ENCODE measurements at regions of chr2 and their contacts with region 1.

Region 1: GRCh38 chr2:120174963-120175581 is 48.1 kb downstream of the TMEM185B start:
- DNase-seq: no peak
- ATAC-seq: no peak
- H3K4me3 ChIP-seq: no peak overlapping the region
- H3K27ac ChIP-seq: no peak overlapping the region
- H3K4me1 ChIP-seq: peaks cover 28% of the 10 kb centered on the region
- H3K27me3 ChIP-seq: no peaks in the 10 kb centered on the region
- CTCF ChIP-seq: peak; percentile 64 to 74 (median 64)
- EP300 ChIP-seq: no peak
- POLR2A ChIP-seq: no peak
- RAD21 ChIP-seq: peak; percentile 82

Region 2: DNA sequence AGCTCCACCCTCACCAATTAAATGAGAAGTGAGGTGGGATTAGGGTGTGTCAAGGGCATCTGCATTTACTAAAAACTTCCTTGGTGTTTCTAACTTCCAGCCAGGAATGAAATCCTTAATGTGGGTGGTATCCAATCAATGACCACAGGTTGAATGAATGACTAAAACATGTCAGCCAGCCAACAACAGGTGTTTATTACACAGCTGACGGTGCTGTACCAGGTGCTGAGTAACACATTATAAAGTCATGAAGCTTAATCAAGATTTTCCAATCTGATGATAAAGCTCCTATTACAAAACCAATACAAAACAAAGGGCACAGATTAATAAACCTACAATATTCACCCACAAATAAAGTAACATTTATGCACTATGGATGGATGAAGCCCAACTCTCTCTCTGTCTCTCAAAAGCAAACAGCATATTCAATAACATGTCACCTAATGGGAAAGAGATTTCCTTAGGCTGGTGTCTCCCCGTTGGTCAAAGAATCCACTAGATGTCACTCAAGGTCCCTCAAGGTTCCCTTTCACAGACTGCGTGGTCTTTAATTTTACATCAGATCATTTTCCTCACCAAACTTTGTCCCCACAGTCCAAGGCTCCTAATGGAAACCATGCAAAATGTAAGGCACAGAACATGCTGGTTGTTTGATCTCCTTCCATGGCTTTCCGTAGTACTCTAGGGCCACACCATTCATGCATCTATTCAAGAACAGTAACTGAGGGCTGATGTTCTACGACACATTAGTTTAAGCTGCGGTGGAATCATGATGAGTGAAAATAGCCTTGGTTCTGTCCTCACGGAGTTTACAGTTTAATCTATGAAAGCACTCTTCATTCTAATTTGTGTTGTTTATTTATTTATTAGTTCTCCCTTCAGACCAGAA is 421.8 kb before region 1 on chr2:
- CTCF ChIA-PET with region 1: interaction called, 144 read pairs
- POLR2A ChIA-PET with region 1: interaction called, 3 read pairs
- RAD21 ChIA-PET with region 1: interaction called, 90 read pairs
- SMC1A ChIA-PET with region 1: interaction called, 69 read pairs
- in situ Hi-C with region 1: loop called (anchors 5 kb)
- intact Hi-C with region 1: loop called (anchors 1 kb)
- DNase-seq: no peak
- ATAC-seq: peak; percentile 91
- H3K4me3 ChIP-seq: no peak overlapping the region
- H3K27ac ChIP-seq: no peak overlapping the region
- H3K4me1 ChIP-seq: no peaks in the 10 kb centered on the region
- H3K27me3 ChIP-seq: peaks cover 0 to 5% of the 10 kb centered on the region in 2 experiments; a peak in 1 of 4 replicates
- CTCF ChIP-seq: peak; percentile 68 to 81 (median 73)
- EP300 ChIP-seq: no peak
- POLR2A ChIP-seq: no peak
- RAD21 ChIP-seq: peak; percentile 92

Region 3: DNA sequence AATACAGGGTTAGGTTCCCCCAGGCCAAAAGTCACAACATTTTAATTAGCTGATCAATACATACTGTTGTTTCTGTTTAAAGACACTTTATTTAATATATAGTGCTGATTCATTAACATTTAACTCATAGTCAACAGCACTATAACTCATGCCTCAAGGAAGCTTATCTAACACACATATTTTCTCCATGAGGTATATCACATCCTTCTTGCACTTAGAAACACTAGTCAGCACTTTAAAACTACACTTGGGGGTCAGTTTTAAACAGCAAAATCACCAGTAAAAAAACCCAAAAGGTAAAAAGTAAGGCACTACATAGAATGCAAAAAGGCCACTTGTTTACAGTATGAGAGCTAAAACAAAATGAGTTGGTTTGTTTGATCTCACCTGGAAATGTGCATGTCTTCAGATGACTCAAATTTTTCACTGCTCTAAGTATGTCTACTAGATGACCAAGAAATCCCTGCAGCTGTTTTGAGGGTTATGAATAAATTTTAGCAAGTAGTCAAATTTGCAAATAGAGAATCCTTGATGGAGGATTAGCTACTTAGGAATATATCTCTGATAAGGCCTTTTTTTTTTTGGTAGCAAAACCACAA is 216.3 kb before region 1 on chr2:
- CTCF ChIA-PET with region 1: interaction called, 10 read pairs
- POLR2A ChIA-PET with region 1: no interaction called
- RAD21 ChIA-PET with region 1: no interaction called
- SMC1A ChIA-PET with region 1: interaction called, 3 read pairs
- in situ Hi-C with region 1: no loop called
- intact Hi-C with region 1: no loop called
- DNase-seq: no peak
- ATAC-seq: no peak
- H3K4me3 ChIP-seq: no peak overlapping the region
- H3K27ac ChIP-seq: no peak overlapping the region
- H3K4me1 ChIP-seq: no peaks in the 10 kb centered on the region
- H3K27me3 ChIP-seq: no peaks in the 10 kb centered on the region
- CTCF ChIP-seq: no peak
- EP300 ChIP-seq: no peak
- POLR2A ChIP-seq: no peak
- RAD21 ChIP-seq: no peak

Region 4: DNA sequence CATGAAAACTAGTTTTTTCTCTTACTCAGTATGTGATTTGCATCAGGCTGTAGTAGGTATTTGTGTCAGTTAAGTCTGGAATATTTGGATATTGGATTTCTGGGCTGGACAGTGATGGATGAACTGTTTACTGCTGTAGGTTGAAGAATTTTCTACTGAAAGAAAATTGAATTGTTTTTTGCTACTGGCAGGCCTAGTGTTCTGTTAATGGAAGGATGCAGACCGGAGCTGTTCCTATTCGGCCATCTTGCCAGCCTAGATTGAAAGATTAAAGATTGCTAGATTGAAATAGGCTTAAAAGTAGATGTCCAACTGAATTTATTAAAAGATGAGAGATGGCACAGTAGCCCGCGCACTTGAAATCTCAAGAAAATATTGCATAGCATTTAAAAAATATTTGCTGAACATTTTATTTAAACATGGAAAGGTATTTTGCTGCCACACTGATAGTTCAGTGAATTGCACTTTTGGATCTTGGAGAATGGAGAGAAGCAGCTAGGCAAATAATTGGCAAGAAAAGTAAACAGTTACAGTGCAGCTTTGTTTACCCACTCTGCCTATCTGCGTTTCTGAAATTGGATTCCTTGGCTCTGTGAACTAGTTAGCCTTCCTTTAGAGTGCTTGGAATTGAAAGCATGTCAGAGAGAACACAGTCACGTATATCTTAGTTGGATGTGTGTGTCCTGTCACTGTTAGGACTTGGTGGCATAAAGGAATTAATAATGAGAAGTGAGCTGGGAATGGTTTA is 108.1 kb before region 1 on chr2:
- CTCF ChIA-PET with region 1: no interaction called
- POLR2A ChIA-PET with region 1: no interaction called
- RAD21 ChIA-PET with region 1: no interaction called
- SMC1A ChIA-PET with region 1: no interaction called
- in situ Hi-C with region 1: no loop called
- intact Hi-C with region 1: no loop called
- DNase-seq: no peak
- ATAC-seq: no peak
- H3K4me3 ChIP-seq: no peak overlapping the region
- H3K27ac ChIP-seq: no peak overlapping the region
- H3K4me1 ChIP-seq: no peaks in the 10 kb centered on the region
- H3K27me3 ChIP-seq: no peaks in the 10 kb centered on the region
- CTCF ChIP-seq: no peak
- EP300 ChIP-seq: no peak
- POLR2A ChIP-seq: no peak
- RAD21 ChIP-seq: no peak

Region 5: GRCh38 chr2:120109186-120110061 is 65.6 kb before region 1 on chr2:
- CTCF ChIA-PET with region 1: interaction called, 148 read pairs
- POLR2A ChIA-PET with region 1: interaction called, 3 read pairs
- RAD21 ChIA-PET with region 1: interaction called, 65 read pairs
- SMC1A ChIA-PET with region 1: interaction called, 103 read pairs
- in situ Hi-C with region 1: no loop called
- intact Hi-C with region 1: loop called (anchors 1 kb)
- DNase-seq: peak; percentile 19
- ATAC-seq: peak; percentile 71
- H3K4me3 ChIP-seq: no peak overlapping the region
- H3K27ac ChIP-seq: no peak overlapping the region
- H3K4me1 ChIP-seq: peaks cover 7% of the 10 kb centered on the region
- H3K27me3 ChIP-seq: no peaks in the 10 kb centered on the region
- CTCF ChIP-seq: peak; percentile 28 to 55 (median 46); a peak in 5 of 6 replicates
- EP300 ChIP-seq: no peak
- POLR2A ChIP-seq: no peak
- RAD21 ChIP-seq: peak; percentile 67

Region 6: DNA sequence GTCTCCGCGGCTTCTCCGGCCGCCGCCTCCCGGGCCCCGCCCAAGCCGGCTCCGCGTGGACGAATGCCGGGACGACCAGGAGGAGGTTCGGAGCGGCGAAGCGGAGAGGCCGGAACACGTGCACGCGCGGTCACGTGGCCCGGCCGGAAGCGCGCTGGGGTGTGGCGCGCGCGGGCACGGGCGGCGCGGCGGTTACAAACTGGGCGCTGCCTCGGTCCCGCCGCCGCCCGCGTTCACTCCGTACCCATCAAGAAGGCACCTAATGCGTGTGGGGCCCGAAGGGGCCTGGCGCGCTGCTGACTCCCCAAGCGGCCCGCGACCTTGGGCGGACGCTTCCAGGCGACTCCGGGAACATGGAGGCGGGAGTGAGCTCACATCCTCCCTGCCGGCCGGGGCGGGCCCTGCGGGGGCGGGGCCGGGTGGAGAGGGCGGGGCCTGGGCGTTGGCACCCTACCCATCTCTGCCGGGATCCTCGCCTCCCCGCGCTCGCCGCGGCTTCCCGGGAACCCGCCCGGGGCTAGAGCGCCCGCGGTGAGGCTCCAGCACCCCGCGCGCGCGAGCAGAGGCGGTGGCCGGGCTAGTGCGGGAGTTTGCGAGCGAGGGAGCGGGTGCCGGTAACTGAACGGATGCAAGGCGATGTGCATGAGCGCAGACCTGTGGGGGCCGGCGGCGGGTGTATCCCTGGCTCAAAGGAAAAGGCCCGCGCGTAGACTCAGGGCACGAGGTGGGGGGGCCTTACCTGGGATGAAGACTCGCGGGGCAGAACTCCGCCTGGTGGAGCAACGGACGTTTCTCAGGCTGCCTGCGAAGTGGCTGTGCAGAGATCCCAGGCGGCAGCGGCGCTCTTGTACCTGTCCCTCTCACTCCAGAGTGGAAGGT is 48.2 kb after region 1 on chr2 and contains the start of gene TMEM185B:
- CTCF ChIA-PET with region 1: interaction called, 13 read pairs
- POLR2A ChIA-PET with region 1: no interaction called
- RAD21 ChIA-PET with region 1: interaction called, 14 read pairs
- SMC1A ChIA-PET with region 1: interaction called, 12 read pairs
- in situ Hi-C with region 1: no loop called
- intact Hi-C with region 1: no loop called
- DNase-seq: no peak
- ATAC-seq: peak; percentile 94
- H3K4me3 ChIP-seq: peak within 1 kb of the TSS; percentile 81
- H3K27ac ChIP-seq: peak within 1 kb of the TSS; percentile 83
- H3K4me1 ChIP-seq: peaks cover 22% of the 10 kb centered on the region
- H3K27me3 ChIP-seq: no peaks in the 10 kb centered on the region
- CTCF ChIP-seq: peak; percentile 24 to 50 (median 30); a peak in 5 of 6 replicates
- EP300 ChIP-seq: peak in 1 of 2 experiments; percentile 45; a peak in 1 of 4 replicates
- POLR2A ChIP-seq: peak; percentile 94
- RAD21 ChIP-seq: peak; percentile 33; the same call in 1 of the 2 replicates
- polyA plus RNA-seq, gene TMEM185B: 2.4 to 3.2 TPM

Region 7: DNA sequence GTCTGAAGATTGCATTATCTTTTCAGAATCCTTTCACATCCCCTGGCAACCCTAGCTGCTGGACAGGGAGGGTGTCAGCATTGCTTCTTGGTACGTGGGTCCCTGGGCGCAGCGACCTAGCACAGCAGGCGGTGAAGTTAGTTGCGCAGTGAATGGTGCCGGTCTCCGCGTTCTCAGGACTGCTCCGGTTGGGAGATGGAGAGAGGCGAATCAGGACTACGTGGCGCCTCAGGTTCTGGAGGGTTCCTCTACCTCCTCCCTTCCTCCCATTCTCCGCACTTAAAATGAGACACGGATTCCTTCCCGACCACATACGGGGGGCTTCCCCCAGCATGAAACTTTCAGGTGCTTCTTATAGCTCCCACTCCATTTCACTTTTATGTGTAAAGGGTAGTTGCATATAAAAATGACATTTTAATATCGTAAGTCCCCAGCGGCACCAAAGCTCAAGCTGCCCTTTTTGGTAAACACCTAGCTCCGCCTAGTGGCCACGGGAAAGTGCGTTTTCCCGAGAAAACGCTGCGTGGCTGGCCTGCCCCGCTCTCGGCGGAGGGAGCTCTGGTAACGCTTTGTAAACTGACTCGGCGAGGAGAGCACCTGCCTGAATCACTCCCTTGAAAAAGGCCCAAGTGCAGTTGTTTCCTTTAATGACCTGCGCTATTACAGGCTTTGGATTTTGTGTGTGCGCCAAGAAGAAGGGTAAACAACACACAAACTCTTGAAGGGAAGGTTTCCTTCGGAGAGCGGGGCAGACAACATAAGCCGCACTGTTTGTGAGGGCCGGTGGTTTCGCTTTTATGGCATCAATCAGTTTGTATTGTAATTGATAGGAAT is 138.0 kb after region 1 on chr2:
- CTCF ChIA-PET with region 1: interaction called, 148 read pairs
- POLR2A ChIA-PET with region 1: interaction called, 3 read pairs
- RAD21 ChIA-PET with region 1: interaction called, 78 read pairs
- SMC1A ChIA-PET with region 1: interaction called, 103 read pairs
- in situ Hi-C with region 1: no loop called
- intact Hi-C with region 1: loop called (anchors 2 kb)
- DNase-seq: peak; percentile 23
- ATAC-seq: peak; percentile 72
- H3K4me3 ChIP-seq: peak overlapping the region; percentile 47; the same call in 1 of the 2 replicates
- H3K27ac ChIP-seq: no peak overlapping the region
- H3K4me1 ChIP-seq: peaks cover 24% of the 10 kb centered on the region
- H3K27me3 ChIP-seq: 0 out of 4 replicates have a peak, but pooled peaks cover 0 to 1% of the 10 kb centered on the region in 2 experiments
- CTCF ChIP-seq: peak; percentile 93 to 97 (median 96)
- EP300 ChIP-seq: no peak
- POLR2A ChIP-seq: no peak
- RAD21 ChIP-seq: peak; percentile 95